ENCODE measurements at regions of chr9 and their contacts with region 1.

Region 1: DNA sequence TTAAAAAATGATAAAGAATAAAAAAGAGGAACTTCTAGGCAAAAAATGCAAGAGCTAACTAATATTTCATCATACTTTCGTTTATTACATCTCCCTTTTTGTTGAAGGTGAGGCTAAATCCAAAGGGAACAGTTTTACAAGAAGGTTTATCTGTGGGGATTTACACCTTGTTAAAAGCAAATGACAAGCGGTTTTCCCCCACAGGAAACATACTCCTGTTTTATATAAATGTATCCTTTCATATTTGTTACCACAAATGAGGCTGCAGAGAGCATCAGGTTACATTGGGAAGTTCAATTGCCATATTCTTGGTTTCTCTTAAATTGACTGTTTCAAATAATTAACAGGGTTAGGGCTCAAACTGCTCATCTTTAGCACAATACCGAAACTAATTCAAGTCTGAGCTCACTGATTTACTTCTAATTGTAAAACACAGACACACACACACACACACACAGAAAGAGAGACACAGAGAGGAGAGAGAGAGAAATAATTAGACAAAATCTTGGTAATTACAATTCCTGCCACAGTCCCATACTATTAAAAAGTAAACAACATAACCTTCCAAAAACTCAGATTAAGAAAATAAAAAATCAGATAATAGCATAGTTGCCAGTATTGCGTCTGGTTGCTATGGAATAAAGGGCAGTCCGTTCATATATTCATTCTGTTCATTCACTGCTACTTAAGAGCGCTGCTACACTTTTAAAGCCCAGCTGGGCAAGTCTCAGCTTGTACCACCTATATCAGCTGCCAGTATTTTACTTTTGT is 17.1 kb downstream of the RFX3 start:
- DNase-seq: peak; percentile 30
- ATAC-seq: no peak
- H3K4me3 ChIP-seq: peak overlapping the region in 4 of 5 experiments; percentile 10 to 57 (median 41)
- H3K4me3 Mint-ChIP-seq: peak overlapping the region; percentile 57
- H3K27ac ChIP-seq: peak overlapping the region; percentile 21 to 61
- H3K27ac Mint-ChIP-seq: peak overlapping the region; percentile 13
- H3K4me1 ChIP-seq: peaks cover 9 to 15% of the 10 kb centered on the region in 2 donors
- H3K4me1 Mint-ChIP-seq: peaks cover 39% of the 10 kb centered on the region
- H3K27me3 ChIP-seq: no peaks in the 10 kb centered on the region
- H3K27me3 Mint-ChIP-seq: no peaks in the 10 kb centered on the region
- CTCF ChIP-seq: no peak

Region 2: GRCh38 chr9:3473405-3473804 is 35.3 kb before region 1 on chr9:
- CTCF ChIA-PET with region 1: interaction called, 7 read pairs
- POLR2A ChIA-PET with region 1: no interaction called
- intact Hi-C with region 1: loop called (anchors 2 kb)
- DNase-seq: peak; percentile 61
- ATAC-seq: peak; percentile 68
- H3K4me3 ChIP-seq: no peak overlapping the region
- H3K4me3 Mint-ChIP-seq: peak overlapping the region; percentile 9
- H3K27ac ChIP-seq: peak overlapping the region; percentile 32 to 77
- H3K27ac Mint-ChIP-seq: peak overlapping the region; percentile 83
- H3K4me1 ChIP-seq: peaks cover 40 to 44% of the 10 kb centered on the region in 2 donors
- H3K4me1 Mint-ChIP-seq: peaks cover 54% of the 10 kb centered on the region
- H3K27me3 ChIP-seq: no peaks in the 10 kb centered on the region
- H3K27me3 Mint-ChIP-seq: no peaks in the 10 kb centered on the region
- CTCF ChIP-seq: no peak

Region 3: DNA sequence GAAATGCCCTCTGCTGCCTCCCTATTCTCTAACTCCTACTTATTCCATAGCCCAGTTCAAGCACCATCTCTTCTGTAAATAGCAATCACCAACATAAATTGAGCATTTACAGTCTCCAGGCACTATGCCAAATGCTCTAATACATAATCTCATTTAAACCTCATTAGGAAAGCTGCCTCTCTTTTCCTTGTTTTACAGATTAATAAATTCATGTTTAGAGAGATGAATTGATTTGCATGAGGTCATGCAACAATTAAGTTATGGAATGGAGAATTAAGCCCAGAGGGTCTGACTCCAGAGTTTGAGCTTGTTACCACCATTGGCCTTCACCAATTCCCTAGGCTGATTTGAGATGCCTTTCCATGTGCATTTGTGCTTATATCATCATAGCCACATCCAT is 40.5 kb after region 1 on chr9:
- CTCF ChIA-PET with region 1: no interaction called
- POLR2A ChIA-PET with region 1: no interaction called
- intact Hi-C with region 1: no loop called
- DNase-seq: no peak
- ATAC-seq: no peak
- H3K4me3 ChIP-seq: no peak overlapping the region
- H3K4me3 Mint-ChIP-seq: no peak overlapping the region
- H3K27ac ChIP-seq: no peak overlapping the region
- H3K27ac Mint-ChIP-seq: no peak overlapping the region
- H3K4me1 ChIP-seq: no peaks in the 10 kb centered on the region
- H3K4me1 Mint-ChIP-seq: no peaks in the 10 kb centered on the region
- H3K27me3 ChIP-seq: no peaks in the 10 kb centered on the region
- H3K27me3 Mint-ChIP-seq: no peaks in the 10 kb centered on the region
- CTCF ChIP-seq: no peak

Region 4: GRCh38 chr9:3708751-3709150 is 200.0 kb after region 1 on chr9:
- CTCF ChIA-PET with region 1: no interaction called
- POLR2A ChIA-PET with region 1: no interaction called
- intact Hi-C with region 1: no loop called
- DNase-seq: no peak
- ATAC-seq: no peak
- H3K4me3 ChIP-seq: no peak overlapping the region
- H3K4me3 Mint-ChIP-seq: no peak overlapping the region
- H3K27ac ChIP-seq: no peak overlapping the region
- H3K27ac Mint-ChIP-seq: no peak overlapping the region
- H3K4me1 ChIP-seq: no peaks in the 10 kb centered on the region
- H3K4me1 Mint-ChIP-seq: no peaks in the 10 kb centered on the region
- H3K27me3 ChIP-seq: no peaks in the 10 kb centered on the region
- H3K27me3 Mint-ChIP-seq: peaks cover 19% of the 10 kb centered on the region
- CTCF ChIP-seq: no peak

Measured in B cell (primary cell).